Activated CD4-positive, alpha-beta T cell treated with anti-CD3 and anti-CD28 coated beads for 36 hours (primary cell): ENCODE measurements at regions of chr1 and their contacts with region 1.

Region 1: GRCh38 chr1:116605315-116605714 is 34.5 kb upstream of the CD58 start:
- DNase-seq: no peak
- ATAC-seq: no peak
- H3K4me3 Mint-ChIP-seq: no peak overlapping the region
- H3K27ac Mint-ChIP-seq: no peak overlapping the region
- H3K4me1 Mint-ChIP-seq: peaks cover 36% of the 10 kb centered on the region
- H3K27me3 Mint-ChIP-seq: no peaks in the 10 kb centered on the region

Region 2: GRCh38 chr1:116489231-116489697 is 116.1 kb before region 1 on chr1:
- CTCF ChIA-PET with region 1: no interaction called
- POLR2A ChIA-PET with region 1: no interaction called
- intact Hi-C with region 1: no loop called
- DNase-seq: no peak
- ATAC-seq: no peak
- H3K4me3 Mint-ChIP-seq: no peak overlapping the region
- H3K27ac Mint-ChIP-seq: no peak overlapping the region
- H3K4me1 Mint-ChIP-seq: peaks cover 5% of the 10 kb centered on the region
- H3K27me3 Mint-ChIP-seq: no peaks in the 10 kb centered on the region

Region 3: GRCh38 chr1:116556289-116557006 is 48.9 kb before region 1 on chr1:
- CTCF ChIA-PET with region 1: no interaction called
- POLR2A ChIA-PET with region 1: no interaction called
- intact Hi-C with region 1: no loop called
- DNase-seq: peak; percentile 88
- ATAC-seq: peak; percentile 92
- H3K4me3 Mint-ChIP-seq: no peak overlapping the region
- H3K27ac Mint-ChIP-seq: peak overlapping the region; percentile 87
- H3K4me1 Mint-ChIP-seq: peaks cover 73% of the 10 kb centered on the region
- H3K27me3 Mint-ChIP-seq: no peaks in the 10 kb centered on the region

Region 4: GRCh38 chr1:116580446-116581322 is 24.6 kb before region 1 on chr1:
- CTCF ChIA-PET with region 1: no interaction called
- POLR2A ChIA-PET with region 1: no interaction called
- intact Hi-C with region 1: no loop called
- DNase-seq: no peak
- ATAC-seq: no peak
- H3K4me3 Mint-ChIP-seq: no peak overlapping the region
- H3K27ac Mint-ChIP-seq: no peak overlapping the region
- H3K4me1 Mint-ChIP-seq: no peaks in the 10 kb centered on the region
- H3K27me3 Mint-ChIP-seq: no peaks in the 10 kb centered on the region

Region 5: DNA sequence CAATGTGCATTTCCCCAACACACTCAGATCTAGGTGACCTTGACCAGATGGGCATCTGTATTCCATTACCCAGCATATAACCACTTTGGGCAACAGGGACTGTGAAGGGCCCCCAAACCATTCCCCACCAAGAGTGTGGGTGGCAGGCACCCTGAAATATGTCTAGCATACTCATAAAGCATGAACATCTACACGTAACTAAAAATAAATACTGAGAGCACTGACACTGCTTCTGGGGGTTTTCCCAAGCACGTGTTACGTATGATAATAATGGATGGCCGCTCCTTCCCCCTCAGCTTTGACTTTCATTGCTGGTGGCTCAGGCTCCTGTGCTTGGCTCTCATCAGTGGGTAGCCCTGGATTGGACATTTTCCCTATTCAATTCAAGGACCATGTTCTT is 23.1 kb after region 1 on chr1:
- CTCF ChIA-PET with region 1: no interaction called
- POLR2A ChIA-PET with region 1: interaction called, 12 read pairs
- intact Hi-C with region 1: no loop called
- DNase-seq: peak; percentile 43
- ATAC-seq: no peak
- H3K4me3 Mint-ChIP-seq: no peak overlapping the region
- H3K27ac Mint-ChIP-seq: peak overlapping the region; percentile 59
- H3K4me1 Mint-ChIP-seq: peaks cover 16% of the 10 kb centered on the region
- H3K27me3 Mint-ChIP-seq: peaks cover 8% of the 10 kb centered on the region